Panc1 (cell line): ENCODE measurements at regions of chr16 and their contacts with region 1.

Region 1: GRCh38 chr16:54286090-54286993 is at the start of gene IRX3:
- DNase-seq: peak; percentile 45
- ATAC-seq: peak; percentile 84
- H3K4me3 ChIP-seq: peak within 1 kb of the TSS; percentile 64 to 77
- H3K27ac ChIP-seq: peak within 1 kb of the TSS; percentile 71
- H3K4me1 ChIP-seq: peaks cover 3% of the 10 kb centered on the region
- H3K27me3 ChIP-seq: no peaks in the 10 kb centered on the region
- CTCF ChIP-seq: no peak
- total RNA-seq, gene IRX3: 7.0 TPM

Region 2: DNA sequence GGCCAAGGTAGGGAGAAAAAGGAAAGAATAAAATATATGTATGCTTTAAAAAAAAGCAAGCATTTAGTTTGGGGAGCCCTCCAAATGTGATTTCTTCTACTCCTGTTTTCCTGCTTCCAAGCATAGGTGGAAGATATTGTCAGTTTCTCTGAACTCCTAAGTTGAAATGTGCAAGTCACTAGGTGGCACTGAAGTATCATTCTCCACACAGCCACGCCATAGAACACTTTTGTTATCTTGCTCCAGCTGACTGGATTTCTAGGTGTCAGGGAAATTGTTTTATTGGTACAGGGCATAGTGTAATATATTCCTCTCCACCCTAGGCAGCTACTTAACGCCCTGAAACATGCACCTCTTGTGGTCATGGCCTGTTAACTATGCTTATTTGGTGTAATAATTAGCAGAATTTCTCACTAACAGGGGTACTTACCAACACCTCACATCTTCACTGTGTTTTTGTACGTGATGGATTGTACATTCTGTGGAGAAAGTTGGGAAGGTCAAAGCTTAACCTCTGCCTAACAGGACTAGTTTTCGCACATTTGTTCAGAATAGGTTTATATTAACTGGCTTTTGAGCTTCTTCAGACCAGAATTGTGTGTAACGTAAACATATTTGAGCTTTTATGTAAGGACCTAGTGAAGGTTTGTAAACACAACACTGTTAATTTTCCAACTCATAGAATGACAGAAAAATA is 513.0 kb before region 1 on chr16:
- CTCF ChIA-PET with region 1: no interaction called
- POLR2A ChIA-PET with region 1: interaction called, 4 read pairs
- in situ Hi-C with region 1: no loop called
- intact Hi-C with region 1: loop called (anchors 10 kb)
- DNase-seq: no peak
- ATAC-seq: peak; percentile 56
- H3K4me3 ChIP-seq: no peak overlapping the region
- H3K27ac ChIP-seq: peak overlapping the region; percentile 89
- H3K4me1 ChIP-seq: peaks cover 67% of the 10 kb centered on the region
- H3K27me3 ChIP-seq: no peaks in the 10 kb centered on the region
- CTCF ChIP-seq: peak; percentile 74

Region 3: GRCh38 chr16:54178478-54178976 is 107.8 kb before region 1 on chr16:
- CTCF ChIA-PET with region 1: no interaction called
- POLR2A ChIA-PET with region 1: no interaction called
- in situ Hi-C with region 1: no loop called
- intact Hi-C with region 1: no loop called
- DNase-seq: no peak
- ATAC-seq: no peak
- H3K4me3 ChIP-seq: no peak overlapping the region
- H3K27ac ChIP-seq: no peak overlapping the region
- H3K4me1 ChIP-seq: no peaks in the 10 kb centered on the region
- H3K27me3 ChIP-seq: no peaks in the 10 kb centered on the region
- CTCF ChIP-seq: no peak

Region 4: DNA sequence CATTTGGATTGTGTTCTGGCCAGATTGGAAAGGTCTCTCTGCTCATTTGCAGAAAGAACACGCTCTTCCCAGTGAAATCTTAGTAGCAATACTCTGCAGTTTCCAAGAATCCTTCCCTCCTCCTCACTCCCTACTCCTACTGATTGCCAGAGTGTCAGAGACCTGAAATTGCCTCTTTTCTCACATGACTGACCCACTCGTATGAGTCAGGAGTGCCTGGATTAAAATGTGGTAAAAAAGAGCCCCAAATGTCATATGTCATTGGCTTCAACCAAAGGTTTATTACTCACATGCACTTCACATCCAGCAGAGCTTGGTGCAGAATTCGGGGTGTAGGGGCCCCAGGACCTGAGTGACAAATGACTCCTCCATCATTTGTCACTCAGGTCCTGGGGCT is 39.9 kb after region 1 on chr16:
- CTCF ChIA-PET with region 1: no interaction called
- POLR2A ChIA-PET with region 1: no interaction called
- in situ Hi-C with region 1: no loop called
- intact Hi-C with region 1: no loop called
- DNase-seq: no peak
- ATAC-seq: no peak
- H3K4me3 ChIP-seq: no peak overlapping the region
- H3K27ac ChIP-seq: no peak overlapping the region
- H3K4me1 ChIP-seq: no peaks in the 10 kb centered on the region
- H3K27me3 ChIP-seq: no peaks in the 10 kb centered on the region
- CTCF ChIP-seq: no peak

Region 5: GRCh38 chr16:54459509-54460262 is 173.3 kb after region 1 on chr16:
- CTCF ChIA-PET with region 1: no interaction called
- POLR2A ChIA-PET with region 1: no interaction called
- in situ Hi-C with region 1: no loop called
- intact Hi-C with region 1: loop called (anchors 10 kb)
- DNase-seq: no peak
- ATAC-seq: no peak
- H3K4me3 ChIP-seq: no peak overlapping the region
- H3K27ac ChIP-seq: no peak overlapping the region
- H3K4me1 ChIP-seq: no peaks in the 10 kb centered on the region
- H3K27me3 ChIP-seq: no peaks in the 10 kb centered on the region
- CTCF ChIP-seq: no peak

Region 6: DNA sequence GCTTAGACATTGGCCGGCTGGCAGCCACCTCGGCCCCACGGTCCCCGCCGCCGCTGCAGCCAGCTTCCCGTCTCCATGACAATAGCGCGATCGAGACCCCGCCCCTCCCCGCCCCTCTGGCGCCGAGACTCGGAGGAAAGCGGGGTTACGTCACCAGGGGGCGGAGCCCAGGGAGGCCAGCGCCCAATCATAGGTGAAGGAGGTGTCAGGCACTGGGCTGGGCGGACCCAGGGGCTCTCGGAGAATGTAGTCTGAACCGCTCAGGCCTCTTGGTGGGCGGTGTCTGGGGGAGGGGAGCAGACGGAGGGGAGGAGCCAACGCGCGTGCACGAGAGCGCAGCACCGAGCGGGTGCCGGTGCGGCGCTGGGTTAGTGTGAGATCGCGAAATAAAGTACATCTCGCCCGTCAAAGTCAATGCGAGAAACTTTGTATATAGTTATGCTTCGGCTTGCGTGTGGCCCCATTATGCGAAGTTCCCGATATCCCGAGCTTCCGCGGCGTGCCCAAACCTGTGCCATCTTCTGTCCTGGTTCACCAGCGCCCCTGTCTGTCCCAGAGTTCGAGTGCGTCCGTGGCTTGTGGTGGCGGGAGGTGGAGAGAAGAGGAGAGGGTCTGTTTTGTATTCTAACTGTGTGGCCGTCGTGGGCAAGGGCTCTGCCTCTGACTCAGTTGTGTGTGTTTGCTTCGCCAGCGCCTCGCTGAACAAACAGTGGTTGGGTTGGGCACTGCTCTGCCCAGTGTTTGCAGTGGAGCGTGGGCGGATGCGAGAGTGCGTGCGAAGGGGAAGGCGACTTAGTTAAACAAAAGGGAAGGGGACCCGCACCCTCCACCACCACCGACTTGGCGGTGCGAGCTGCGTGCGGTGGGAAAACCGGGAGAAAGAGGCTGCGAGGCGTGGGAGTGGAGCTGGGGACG is 643.0 kb after region 1 on chr16:
- CTCF ChIA-PET with region 1: no interaction called
- POLR2A ChIA-PET with region 1: no interaction called
- in situ Hi-C with region 1: no loop called
- intact Hi-C with region 1: loop called (anchors 2 kb)
- DNase-seq: peak; percentile 86
- ATAC-seq: peak; percentile 90
- H3K4me3 ChIP-seq: peak overlapping the region; percentile 61 to 82
- H3K27ac ChIP-seq: peak overlapping the region; percentile 78
- H3K4me1 ChIP-seq: peaks cover 4% of the 10 kb centered on the region; the same call in 1 of the 2 replicates
- H3K27me3 ChIP-seq: no peaks in the 10 kb centered on the region
- CTCF ChIP-seq: peak; percentile 36